Lower leg skin (tissue), 4 donors: ENCODE measurements at regions of chr11 and their contacts with region 1.

Region 1: GRCh38 chr11:80900265-80900664 is 1459.4 kb upstream of the TENM4 start:
- DNase-seq: no peak
- H3K4me3 ChIP-seq: no peak overlapping the region
- CTCF ChIP-seq: no peak
- POLR2A ChIP-seq: no peak

Region 2: GRCh38 chr11:79331203-79331901 is 1568.9 kb before region 1 on chr11:
- intact Hi-C with region 1: loop called (anchors 5 kb)
- DNase-seq: no peak
- H3K4me3 ChIP-seq: no peak overlapping the region
- CTCF ChIP-seq: no peak
- POLR2A ChIP-seq: no peak